ENCODE measurements at regions of chr19 and their contacts with region 1.

Region 1: GRCh38 chr19:35612559-35613321 is at the start of gene HAUS5:
- DNase-seq: peak; percentile 66
- ATAC-seq: peak; percentile 99
- H3K4me3 ChIP-seq: peak within 1 kb of the TSS; percentile 71 to 75
- H3K27ac ChIP-seq: peak within 1 kb of the TSS; percentile 80
- H3K4me1 ChIP-seq: no peaks in the 10 kb centered on the region
- H3K27me3 ChIP-seq: no peaks in the 10 kb centered on the region
- CTCF ChIP-seq: no peak
- total RNA-seq, gene HAUS5: 23.2 TPM

Region 2: DNA sequence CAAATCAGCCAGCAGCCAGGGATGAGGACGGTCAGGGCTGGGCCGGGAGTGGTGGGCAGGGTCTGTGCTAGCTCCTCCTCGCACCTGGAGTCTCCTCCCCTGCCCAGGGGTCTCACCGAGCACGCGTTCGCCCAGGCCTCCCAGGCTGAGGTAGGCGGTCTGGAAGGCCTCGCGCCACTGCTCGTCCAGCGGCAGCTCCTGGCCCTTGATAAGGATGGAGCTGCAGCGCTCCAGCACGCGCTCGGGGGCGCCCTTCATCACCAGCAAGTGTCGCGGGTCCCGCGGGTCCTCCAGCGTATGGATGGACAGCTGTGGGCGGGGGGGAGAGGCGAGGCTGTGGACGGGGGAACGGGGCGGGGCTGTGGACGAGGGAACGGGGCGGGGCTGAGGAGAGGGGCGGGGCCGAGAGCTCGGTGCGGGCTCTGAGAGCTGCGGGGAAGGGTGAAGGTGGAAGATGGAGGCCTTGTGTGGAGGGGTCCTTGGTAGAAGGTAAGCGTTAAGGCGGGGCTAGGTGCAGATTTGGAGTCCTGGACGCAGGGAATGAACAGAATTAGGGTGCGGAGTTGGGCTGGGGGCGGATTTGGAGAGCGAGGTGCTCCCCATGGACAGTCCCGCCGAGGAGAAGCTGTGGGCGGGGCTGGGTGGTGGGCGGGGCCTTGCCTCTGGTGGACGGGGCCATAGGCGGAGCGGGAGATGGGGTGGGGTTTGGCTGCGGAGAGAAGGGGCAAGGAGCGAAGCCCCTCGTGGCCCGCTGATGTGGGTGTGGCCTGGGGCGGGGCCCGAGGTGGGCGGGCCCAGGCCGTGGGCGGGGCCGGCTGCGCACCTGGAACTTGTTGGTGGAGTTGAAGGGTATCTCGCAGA is 55.0 kb before region 1 on chr19:
- CTCF ChIA-PET with region 1: interaction called, 10 read pairs
- POLR2A ChIA-PET with region 1: no interaction called
- in situ Hi-C with region 1: no loop called
- intact Hi-C with region 1: no loop called
- DNase-seq: no peak
- ATAC-seq: peak; percentile 84
- H3K4me3 ChIP-seq: peak overlapping the region; percentile 31 to 70
- H3K27ac ChIP-seq: no peak overlapping the region
- H3K4me1 ChIP-seq: peaks cover 6% of the 10 kb centered on the region; the same call in 1 of the 2 replicates
- H3K27me3 ChIP-seq: peaks cover 6% of the 10 kb centered on the region; the same call in 1 of the 2 replicates
- CTCF ChIP-seq: no peak

Measured in Panc1 (cell line).